ENCODE measurements at regions of chr12 and their contacts with region 1.

Region 1: DNA sequence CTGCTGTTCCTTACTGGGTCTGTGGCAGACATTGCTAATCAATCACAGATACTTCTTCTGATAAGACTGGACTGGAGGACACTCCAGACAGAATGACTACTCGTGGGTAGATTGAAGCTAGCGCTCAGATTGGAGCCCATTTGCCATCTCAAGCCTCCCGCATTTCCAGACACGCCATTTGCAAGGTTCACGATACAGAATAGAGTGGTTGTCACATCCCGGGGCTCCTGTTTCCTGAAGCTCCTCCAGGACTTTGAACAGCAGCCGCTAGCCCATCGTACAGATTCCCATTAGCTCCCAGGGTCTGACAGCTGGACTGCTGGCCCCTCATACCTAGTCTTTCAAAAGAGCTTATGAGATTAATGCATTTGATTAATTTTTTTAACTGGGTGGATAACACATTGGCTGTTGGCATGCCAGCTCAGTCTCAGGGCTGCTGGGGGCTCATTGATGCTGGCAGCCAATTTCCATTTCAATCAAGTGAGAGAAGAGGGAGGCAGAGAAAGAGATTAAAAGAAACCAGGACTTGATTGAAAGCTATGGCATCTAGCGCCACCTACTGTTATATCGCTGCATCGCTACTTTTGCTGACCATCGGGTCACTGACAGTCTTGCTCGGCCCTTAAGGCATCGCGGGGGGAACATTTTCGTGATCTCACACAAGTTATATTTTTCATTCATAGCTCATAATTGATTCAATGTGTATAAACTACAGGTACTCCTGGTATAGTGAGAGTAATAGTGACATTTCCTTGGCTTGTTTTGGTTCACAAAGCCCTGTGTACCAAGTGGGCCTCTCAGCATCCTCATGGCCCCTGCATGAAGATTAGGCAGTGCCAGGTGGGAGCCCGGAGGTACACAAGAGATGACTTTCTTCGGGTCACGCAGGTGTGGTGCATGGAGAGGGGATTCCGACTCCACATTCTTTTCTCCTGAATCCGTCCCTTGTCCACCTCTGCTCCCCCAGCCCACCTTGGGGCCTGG is 78.6 kb downstream of the CCDC60 start:
- DNase-seq: peak; percentile 54 to 89 (median 66)
- H3K4me3 ChIP-seq: peak overlapping the region in 36 of 59 donors; percentile 3 to 53 (median 30)
- H3K27ac ChIP-seq: peak overlapping the region in 1 of 59 donors; percentile 26
- H3K27me3 ChIP-seq: no peaks in the 10 kb centered on the region
- CTCF ChIP-seq: peak; percentile 81 to 99 (median 93)

Region 2: DNA sequence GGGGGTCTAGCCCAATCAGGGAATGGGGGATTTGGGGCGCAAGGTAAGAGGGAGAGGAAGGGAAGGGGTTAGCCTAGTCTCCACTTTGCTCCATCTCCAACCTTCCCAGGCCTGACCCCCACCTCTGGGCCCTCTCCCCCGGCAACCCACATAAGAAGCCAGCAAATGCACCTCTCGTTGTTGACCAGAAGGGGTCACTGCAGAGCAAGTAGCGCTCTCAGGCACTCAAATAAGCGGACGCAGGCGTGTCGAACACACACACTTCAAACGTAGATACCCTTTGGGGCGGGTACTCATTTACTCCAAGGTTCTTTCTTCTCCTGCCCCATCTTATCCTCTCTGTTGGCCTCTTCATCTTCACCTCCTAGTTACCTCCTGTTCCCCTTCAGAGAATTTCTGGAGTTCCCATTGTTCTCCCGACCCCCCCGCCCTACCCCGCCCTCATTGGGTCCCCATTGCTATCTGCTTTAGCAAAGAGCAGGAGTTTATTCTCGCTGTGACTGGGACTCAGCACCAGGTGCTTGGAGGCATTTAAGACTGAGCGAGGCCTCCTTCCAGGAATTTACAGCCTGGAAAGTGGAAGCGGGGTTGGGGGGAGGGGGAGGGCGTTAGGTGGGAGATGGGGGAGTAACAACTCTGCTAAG is 433.2 kb before region 1 on chr12:
- intact Hi-C with region 1: loop called (anchors 10 kb)
- DNase-seq: peak; percentile 30 to 76 (median 58)
- H3K4me3 ChIP-seq: peak overlapping the region in 56 of 59 donors; percentile 7 to 72 (median 58)
- H3K27ac ChIP-seq: peak overlapping the region in 32 of 59 donors; percentile 24 to 84 (median 72)
- H3K27me3 ChIP-seq: peaks cover 0 to 49% (median 11%) of the 10 kb centered on the region in 45 donors
- CTCF ChIP-seq: peak; percentile 40 to 84 (median 73)

Region 3: GRCh38 chr12:119115296-119115905 is 297.7 kb before region 1 on chr12:
- intact Hi-C with region 1: loop called (anchors 1 to 5 kb)
- DNase-seq: peak in 2 of 10 donors; percentile 39 to 40
- H3K4me3 ChIP-seq: no peak overlapping the region
- H3K27ac ChIP-seq: no peak overlapping the region
- H3K27me3 ChIP-seq: no peaks in the 10 kb centered on the region
- CTCF ChIP-seq: peak; percentile 74 to 99 (median 91)